ENCODE measurements at regions of chr5 and their contacts with region 1.

Region 1: GRCh38 chr5:118611332-118611945 is 376.9 kb downstream of the DTWD2 start:
- DNase-seq: peak; percentile 63
- H3K4me3 Mint-ChIP-seq: no peak overlapping the region
- H3K27ac Mint-ChIP-seq: no peak overlapping the region
- H3K4me1 Mint-ChIP-seq: no peaks in the 10 kb centered on the region
- H3K27me3 Mint-ChIP-seq: no peaks in the 10 kb centered on the region
- CTCF ChIP-seq: peak; percentile 86

Region 2: GRCh38 chr5:117077142-117077541 is 1534.3 kb before region 1 on chr5:
- CTCF ChIA-PET with region 1: no interaction called
- POLR2A ChIA-PET with region 1: no interaction called
- intact Hi-C with region 1: loop called (anchors 1 kb)
- DNase-seq: peak; percentile 51
- H3K4me3 Mint-ChIP-seq: no peak overlapping the region
- H3K27ac Mint-ChIP-seq: no peak overlapping the region
- H3K4me1 Mint-ChIP-seq: no peaks in the 10 kb centered on the region
- H3K27me3 Mint-ChIP-seq: no peaks in the 10 kb centered on the region
- CTCF ChIP-seq: peak; percentile 53

Region 3: DNA sequence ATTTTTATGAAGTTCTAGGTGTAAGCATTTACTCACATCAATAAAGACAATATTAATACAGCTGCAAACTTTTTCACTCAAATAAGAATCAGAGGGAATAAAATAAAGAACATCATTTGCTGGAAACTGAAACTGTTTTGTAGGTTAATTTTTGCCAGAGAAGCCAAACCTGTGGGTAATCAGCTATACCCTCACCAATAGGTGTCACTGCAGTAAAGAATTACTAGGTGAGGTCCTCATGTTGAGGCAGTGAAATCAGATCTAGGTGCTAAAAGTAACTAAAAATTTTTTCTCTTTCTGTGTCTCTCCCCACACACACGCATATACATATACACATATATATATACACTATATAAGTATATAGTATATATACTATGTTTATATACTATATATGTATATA is 1020.5 kb before region 1 on chr5:
- CTCF ChIA-PET with region 1: interaction called, 22 read pairs
- POLR2A ChIA-PET with region 1: no interaction called
- intact Hi-C with region 1: loop called (anchors 1 kb)
- DNase-seq: peak; percentile 67
- H3K4me3 Mint-ChIP-seq: no peak overlapping the region
- H3K27ac Mint-ChIP-seq: no peak overlapping the region
- H3K4me1 Mint-ChIP-seq: peaks cover 20% of the 10 kb centered on the region
- H3K27me3 Mint-ChIP-seq: no peaks in the 10 kb centered on the region
- CTCF ChIP-seq: peak; percentile 59

Region 4: GRCh38 chr5:118060833-118061232 is 550.6 kb before region 1 on chr5:
- CTCF ChIA-PET with region 1: no interaction called
- POLR2A ChIA-PET with region 1: no interaction called
- intact Hi-C with region 1: loop called (anchors 5 kb)
- DNase-seq: peak; percentile 5
- H3K4me3 Mint-ChIP-seq: no peak overlapping the region
- H3K27ac Mint-ChIP-seq: no peak overlapping the region
- H3K4me1 Mint-ChIP-seq: no peaks in the 10 kb centered on the region
- H3K27me3 Mint-ChIP-seq: no peaks in the 10 kb centered on the region
- CTCF ChIP-seq: peak; percentile 17

Region 5: GRCh38 chr5:118791926-118792734 is 180.7 kb after region 1 on chr5:
- CTCF ChIA-PET with region 1: interaction called, 7 read pairs
- POLR2A ChIA-PET with region 1: no interaction called
- intact Hi-C with region 1: loop called (anchors 5 kb)
- DNase-seq: peak; percentile 70
- H3K4me3 Mint-ChIP-seq: no peak overlapping the region
- H3K27ac Mint-ChIP-seq: no peak overlapping the region
- H3K4me1 Mint-ChIP-seq: no peaks in the 10 kb centered on the region
- H3K27me3 Mint-ChIP-seq: no peaks in the 10 kb centered on the region
- CTCF ChIP-seq: peak; percentile 60

Region 6: GRCh38 chr5:118956727-118957126 is 345.3 kb after region 1 on chr5:
- CTCF ChIA-PET with region 1: interaction called, 3 read pairs
- POLR2A ChIA-PET with region 1: no interaction called
- intact Hi-C with region 1: loop called (anchors 5 kb)
- DNase-seq: peak; percentile 14
- H3K4me3 Mint-ChIP-seq: no peak overlapping the region
- H3K27ac Mint-ChIP-seq: no peak overlapping the region
- H3K4me1 Mint-ChIP-seq: no peaks in the 10 kb centered on the region
- H3K27me3 Mint-ChIP-seq: no peaks in the 10 kb centered on the region
- CTCF ChIP-seq: peak; percentile 35